H1 (cell line): ENCODE measurements at regions of chr15 and their contacts with region 1.

Region 1: GRCh38 chr15:72599855-72600464 is 54.5 kb upstream of the GOLGA6B start:
- DNase-seq: no peak
- H3K4me3 ChIP-seq: no peak overlapping the region
- H3K27ac ChIP-seq: no peak overlapping the region
- H3K4me1 ChIP-seq: peaks cover 0 to 8% (median under 1%) of the 10 kb centered on the region in 4 experiments; a peak in 3 of 7 replicates
- H3K27me3 ChIP-seq: no peaks in the 10 kb centered on the region
- CTCF ChIP-seq: peak in 2 of 3 experiments; percentile 53 to 59; a peak in 3 of 4 replicates
- EP300 ChIP-seq: no peak
- POLR2A ChIP-seq: no peak
- RAD21 ChIP-seq: peak; percentile 68 to 73

Region 2: DNA sequence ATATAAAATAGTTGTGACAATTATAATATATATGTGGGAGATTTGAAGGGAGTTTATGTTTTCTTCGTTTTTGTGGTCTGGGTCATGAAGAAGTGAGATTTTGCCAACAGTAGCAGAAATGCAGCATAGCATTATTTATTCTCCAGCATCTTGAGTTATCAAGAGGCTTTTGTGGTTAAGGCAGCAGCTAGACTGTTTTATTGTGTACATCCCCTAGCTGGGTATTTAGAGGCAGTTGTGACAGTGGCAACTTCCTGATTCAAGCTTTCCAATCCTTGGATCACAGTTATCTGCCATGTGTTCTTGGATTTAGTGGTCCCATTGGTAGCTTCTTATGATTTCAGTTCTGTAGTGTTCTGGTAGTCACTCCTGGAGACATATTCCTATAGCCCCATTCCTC is 96.8 kb before region 1 on chr15:
- CTCF ChIA-PET with region 1: no interaction called
- POLR2A ChIA-PET with region 1: no interaction called
- DNase-seq: no peak
- H3K4me3 ChIP-seq: no peak overlapping the region
- H3K27ac ChIP-seq: no peak overlapping the region
- H3K4me1 ChIP-seq: no peaks in the 10 kb centered on the region; a peak in 1 of 7 replicates
- H3K27me3 ChIP-seq: no peaks in the 10 kb centered on the region
- CTCF ChIP-seq: no peak
- EP300 ChIP-seq: no peak
- POLR2A ChIP-seq: no peak
- RAD21 ChIP-seq: no peak

Region 3: GRCh38 chr15:72585476-72586082 is 14.4 kb before region 1 on chr15:
- CTCF ChIA-PET with region 1: interaction called, 25 read pairs
- POLR2A ChIA-PET with region 1: interaction called, 4 read pairs
- DNase-seq: no peak
- H3K4me3 ChIP-seq: no peak overlapping the region
- H3K27ac ChIP-seq: no peak overlapping the region
- H3K4me1 ChIP-seq: no peaks in the 10 kb centered on the region
- H3K27me3 ChIP-seq: no peaks in the 10 kb centered on the region
- CTCF ChIP-seq: peak in 1 of 3 experiments; percentile 26; a peak in 1 of 4 replicates
- EP300 ChIP-seq: no peak
- POLR2A ChIP-seq: no peak
- RAD21 ChIP-seq: peak; percentile 19 to 37; a peak in 2 of 4 replicates

Region 4: GRCh38 chr15:72616491-72617210 is 16.7 kb after region 1 on chr15:
- CTCF ChIA-PET with region 1: interaction called, 32 read pairs
- POLR2A ChIA-PET with region 1: interaction called, 4 read pairs
- DNase-seq: no peak
- H3K4me3 ChIP-seq: no peak overlapping the region
- H3K27ac ChIP-seq: no peak overlapping the region; the same call in 1 of the 2 replicates
- H3K4me1 ChIP-seq: peaks cover 7 to 18% (median 10%) of the 10 kb centered on the region in 4 experiments
- H3K27me3 ChIP-seq: no peaks in the 10 kb centered on the region
- CTCF ChIP-seq: no peak
- EP300 ChIP-seq: no peak
- POLR2A ChIP-seq: no peak
- RAD21 ChIP-seq: no peak

Region 5: DNA sequence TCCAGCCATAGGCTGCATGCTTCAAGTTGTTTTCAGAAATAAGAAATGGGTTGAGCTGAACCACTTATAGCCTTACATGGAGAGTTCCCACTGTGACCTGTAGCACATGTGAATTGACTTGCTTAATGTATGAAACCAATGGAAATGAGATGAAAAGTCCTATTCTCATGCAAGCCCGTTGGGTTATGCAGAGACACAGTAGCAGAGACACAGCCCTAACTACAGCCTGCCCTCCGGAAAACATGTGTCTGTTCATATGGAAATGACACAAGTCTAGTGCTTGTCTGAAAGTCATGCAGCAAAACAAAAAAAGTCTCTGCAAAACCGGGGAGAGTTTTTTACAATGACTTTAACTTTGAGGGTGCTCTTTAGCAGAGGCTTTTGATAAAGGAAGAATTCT is 71.6 kb after region 1 on chr15:
- CTCF ChIA-PET with region 1: interaction called, 15 read pairs
- POLR2A ChIA-PET with region 1: interaction called, 4 read pairs
- DNase-seq: no peak
- H3K4me3 ChIP-seq: peak overlapping the region in 3 of 4 experiments; percentile 5 to 46 (median 7); a peak in 3 of 8 replicates
- H3K27ac ChIP-seq: no peak overlapping the region
- H3K4me1 ChIP-seq: peaks cover 0 to 7% (median 4%) of the 10 kb centered on the region in 4 experiments; a peak in 6 of 7 replicates
- H3K27me3 ChIP-seq: no peaks in the 10 kb centered on the region
- CTCF ChIP-seq: no peak
- EP300 ChIP-seq: no peak
- POLR2A ChIP-seq: no peak
- RAD21 ChIP-seq: no peak

Region 6: DNA sequence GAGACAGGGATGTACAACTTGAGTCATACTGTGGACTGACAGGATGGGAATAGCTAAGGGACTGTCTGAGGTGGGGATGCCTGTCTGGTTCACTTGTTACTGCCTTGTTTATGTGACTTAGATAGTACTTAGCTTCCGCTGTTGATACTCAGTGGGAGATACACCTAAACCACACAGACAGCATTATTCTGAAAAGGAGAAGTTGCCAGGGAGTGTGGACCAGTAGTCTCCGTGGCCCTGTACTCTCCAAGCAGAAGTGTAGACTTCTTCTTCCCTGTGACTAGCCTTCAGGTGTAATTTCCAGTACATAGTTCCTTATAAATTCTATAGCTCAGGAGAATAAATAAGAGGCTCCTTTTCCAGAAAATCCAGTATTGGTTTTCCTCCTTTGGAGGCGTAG is 81.0 kb after region 1 on chr15:
- CTCF ChIA-PET with region 1: interaction called, 19 read pairs
- POLR2A ChIA-PET with region 1: no interaction called
- DNase-seq: no peak
- H3K4me3 ChIP-seq: no peak overlapping the region
- H3K27ac ChIP-seq: no peak overlapping the region
- H3K4me1 ChIP-seq: 0 out of 7 replicates have a peak, but pooled peaks cover 0 to 2% (median 0%) of the 10 kb centered on the region in 4 experiments
- H3K27me3 ChIP-seq: no peaks in the 10 kb centered on the region
- CTCF ChIP-seq: no peak
- EP300 ChIP-seq: no peak
- POLR2A ChIP-seq: no peak
- RAD21 ChIP-seq: no peak

Region 7: GRCh38 chr15:72685925-72686794 is 86.2 kb after region 1 on chr15 and contains the starts of genes BBS4 and HIGD2B:
- CTCF ChIA-PET with region 1: interaction called, 19 read pairs
- POLR2A ChIA-PET with region 1: no interaction called
- DNase-seq: peak; percentile 86 to 93
- H3K4me3 ChIP-seq: peak within 1 kb of the TSS; percentile 71 to 94 (median 83)
- H3K27ac ChIP-seq: peak within 1 kb of the TSS; percentile 82
- H3K4me1 ChIP-seq: 0 out of 7 replicates have a peak, but pooled peaks cover 0 to 2% (median 0%) of the 10 kb centered on the region in 4 experiments
- H3K27me3 ChIP-seq: no peaks in the 10 kb centered on the region
- CTCF ChIP-seq: no peak
- EP300 ChIP-seq: 0 out of 3 replicates have a peak, but pooled peaks of 1 of the 2 experiments have one; percentile 61
- POLR2A ChIP-seq: peak; percentile 80 to 89
- RAD21 ChIP-seq: no peak
- total RNA-seq, gene BBS4: 24.1 and 24.3 TPM in 2 replicates
- total RNA-seq, gene HIGD2B: not detected in 2 replicates

Region 8: GRCh38 chr15:72722071-72722696 is 122.2 kb after region 1 on chr15:
- CTCF ChIA-PET with region 1: interaction called, 19 read pairs
- POLR2A ChIA-PET with region 1: interaction called, 4 read pairs
- DNase-seq: peak; percentile 47 to 85
- H3K4me3 ChIP-seq: no peak overlapping the region
- H3K27ac ChIP-seq: no peak overlapping the region
- H3K4me1 ChIP-seq: peaks cover 0 to 3% (median 1%) of the 10 kb centered on the region in 4 experiments; a peak in 2 of 7 replicates
- H3K27me3 ChIP-seq: no peaks in the 10 kb centered on the region
- CTCF ChIP-seq: peak; percentile 29 to 90 (median 77)
- EP300 ChIP-seq: no peak
- POLR2A ChIP-seq: no peak
- RAD21 ChIP-seq: peak; percentile 75 to 82

Region 9: GRCh38 chr15:72783563-72784237 is 183.7 kb after region 1 on chr15 and contains the start of gene ADPGK:
- CTCF ChIA-PET with region 1: no interaction called
- POLR2A ChIA-PET with region 1: no interaction called
- DNase-seq: peak; percentile 75 to 99
- H3K4me3 ChIP-seq: peak within 1 kb of the TSS; percentile 79 to 98 (median 89)
- H3K27ac ChIP-seq: peak within 1 kb of the TSS; percentile 87
- H3K4me1 ChIP-seq: peaks cover 0 to 8% (median 2%) of the 10 kb centered on the region in 4 experiments; a peak in 3 of 7 replicates
- H3K27me3 ChIP-seq: no peaks in the 10 kb centered on the region
- CTCF ChIP-seq: no peak
- EP300 ChIP-seq: peak in 1 of 2 experiments; percentile 72; a peak in 1 of 3 replicates
- POLR2A ChIP-seq: peak; percentile 96 to 97
- RAD21 ChIP-seq: peak in 1 of 2 experiments; percentile 11; a peak in 2 of 4 replicates
- total RNA-seq, gene ADPGK: 35.7 and 38.2 TPM in 2 replicates